Cardiac septum (tissue), 1 donor: ENCODE measurements at regions of chr14 and their contacts with region 1.

Region 1: DNA sequence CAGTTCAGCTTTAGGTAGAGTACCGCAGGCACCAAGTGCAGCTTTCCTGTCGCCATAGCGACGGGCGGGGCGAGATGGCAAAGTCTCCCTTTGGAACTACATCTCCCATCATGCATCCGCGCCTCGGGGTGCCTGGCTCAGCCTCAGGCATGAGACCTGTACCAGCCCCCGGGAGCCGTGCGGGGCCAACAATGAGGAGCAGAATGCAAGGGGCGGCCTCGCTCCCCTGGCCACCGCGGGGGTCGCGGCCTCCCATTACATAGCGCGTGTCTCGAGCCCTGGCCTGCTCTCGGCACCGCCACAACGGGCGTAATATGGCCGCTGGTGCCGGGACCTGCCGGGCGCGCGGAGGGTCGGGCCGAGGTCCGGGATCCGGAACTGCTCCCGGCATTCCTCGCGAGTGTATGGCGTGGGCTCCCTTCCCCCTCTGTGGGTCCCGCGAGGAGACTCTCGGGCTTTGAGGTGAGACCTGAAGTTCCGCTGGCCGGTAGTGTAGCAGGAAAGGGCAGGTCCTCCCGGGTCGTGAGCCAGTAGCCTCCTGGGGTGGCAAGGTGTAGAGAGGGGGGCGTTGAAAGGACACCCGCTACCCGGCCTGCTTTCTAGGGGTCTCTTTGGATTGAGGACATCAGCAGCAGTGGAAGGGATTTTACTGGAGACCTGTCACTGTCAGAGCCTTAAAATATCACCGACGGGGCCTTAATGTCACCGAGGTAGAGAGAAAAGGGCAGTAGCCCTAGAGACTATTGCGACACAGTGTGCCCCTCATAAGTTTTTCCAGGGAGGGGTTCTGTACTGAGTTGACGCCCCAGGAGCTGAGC is at the start of gene THTPA:
- DNase-seq: peak; percentile 97
- total RNA-seq, gene THTPA: 17.5 TPM

Region 2: GRCh38 chr14:23095196-23096108 is 460.6 kb before region 1 on chr14 and contains the start of gene C14orf119:
- intact Hi-C with region 1: loop called (anchors 10 kb)
- DNase-seq: peak; percentile 100
- total RNA-seq, gene C14orf119: 28.9 TPM

Region 3: DNA sequence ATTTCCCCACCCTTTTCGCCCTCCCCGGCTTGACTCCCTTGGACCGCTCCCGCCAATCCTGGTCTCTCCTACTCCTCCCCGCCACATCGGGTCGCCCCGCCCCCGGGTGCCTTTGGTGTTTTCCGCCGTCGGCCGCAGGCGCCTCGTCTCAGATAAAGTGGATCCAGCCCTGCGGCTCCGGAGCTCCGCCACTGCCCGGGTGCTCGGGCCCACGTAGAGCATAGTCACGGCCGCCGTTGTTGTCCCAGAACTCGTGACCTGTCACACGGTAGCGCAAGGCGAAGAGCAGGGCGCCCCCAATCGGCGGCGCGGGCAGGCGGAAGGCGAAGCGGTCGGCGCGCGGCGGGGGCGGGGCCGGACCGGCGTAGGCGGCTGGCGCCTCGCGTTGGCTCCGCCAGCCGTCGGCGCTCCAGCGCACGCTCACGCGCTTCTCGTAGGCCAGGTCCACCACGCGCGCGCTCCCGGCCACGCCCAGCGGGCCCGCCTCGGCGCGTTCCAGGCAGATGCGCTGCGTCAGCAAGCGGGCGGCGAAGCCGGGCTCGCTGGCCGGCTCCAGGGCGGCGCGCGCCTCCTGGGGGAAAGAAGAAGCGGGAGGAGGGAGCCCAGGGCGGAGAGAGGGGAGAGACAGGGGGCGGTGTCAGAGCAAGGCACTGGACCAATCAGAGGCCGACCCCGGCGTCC is 254.7 kb before region 1 on chr14:
- intact Hi-C with region 1: loop called (anchors 5 kb)
- DNase-seq: peak; percentile 99

Region 4: DNA sequence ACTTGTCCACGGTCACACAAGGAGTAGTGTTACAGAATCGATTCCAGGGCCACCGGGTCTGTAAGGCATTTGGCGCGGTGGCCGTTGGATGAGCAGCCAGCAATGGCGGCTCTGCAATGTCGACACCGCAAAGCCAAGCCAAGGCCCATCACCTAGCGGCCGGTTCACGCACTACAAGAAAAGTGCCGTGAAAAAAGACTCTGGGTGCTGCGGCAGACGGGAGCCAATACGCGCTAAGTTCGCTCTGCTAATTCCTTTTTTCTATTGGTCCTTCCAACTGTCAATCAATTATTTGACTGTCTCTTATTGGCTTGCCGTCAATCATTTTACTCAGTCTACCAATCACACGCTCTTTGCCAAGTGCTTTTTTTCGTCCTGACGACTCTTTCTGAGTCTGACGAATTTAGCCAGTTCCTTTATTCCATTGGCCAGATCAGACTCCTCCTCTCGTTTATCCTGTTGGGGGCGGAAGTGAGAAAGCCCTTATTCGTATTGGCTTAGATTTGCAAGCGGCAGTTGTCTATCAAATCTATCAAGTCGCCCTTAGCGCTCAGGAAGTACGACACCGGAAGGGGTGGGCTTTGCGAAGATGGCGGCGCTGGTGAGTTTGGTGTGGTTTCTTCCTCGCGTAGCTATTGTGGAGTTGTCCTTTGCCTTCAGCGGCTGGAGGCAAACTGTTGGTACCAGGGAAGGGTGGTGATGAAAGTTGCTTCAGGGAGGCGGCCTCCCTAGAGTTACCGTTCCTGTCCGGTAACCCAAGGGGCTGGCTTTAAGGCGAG is 86.8 kb before region 1 on chr14 and contains the start of gene NGDN:
- intact Hi-C with region 1: loop called (anchors 2 kb)
- DNase-seq: peak; percentile 97
- total RNA-seq, gene NGDN: 16.2 TPM

Region 5: GRCh38 chr14:23675906-23676305 is 119.8 kb after region 1 on chr14:
- intact Hi-C with region 1: no loop called
- DNase-seq: no peak